Right ventricle myocardium inferior (tissue), 1 donor: ENCODE measurements at regions of chr3 and their contacts with region 1.

Region 1: GRCh38 chr3:27319847-27320526 is 49.2 kb downstream of the NEK10 start:
- DNase-seq: no peak
- ATAC-seq: peak; percentile 67

Region 2: DNA sequence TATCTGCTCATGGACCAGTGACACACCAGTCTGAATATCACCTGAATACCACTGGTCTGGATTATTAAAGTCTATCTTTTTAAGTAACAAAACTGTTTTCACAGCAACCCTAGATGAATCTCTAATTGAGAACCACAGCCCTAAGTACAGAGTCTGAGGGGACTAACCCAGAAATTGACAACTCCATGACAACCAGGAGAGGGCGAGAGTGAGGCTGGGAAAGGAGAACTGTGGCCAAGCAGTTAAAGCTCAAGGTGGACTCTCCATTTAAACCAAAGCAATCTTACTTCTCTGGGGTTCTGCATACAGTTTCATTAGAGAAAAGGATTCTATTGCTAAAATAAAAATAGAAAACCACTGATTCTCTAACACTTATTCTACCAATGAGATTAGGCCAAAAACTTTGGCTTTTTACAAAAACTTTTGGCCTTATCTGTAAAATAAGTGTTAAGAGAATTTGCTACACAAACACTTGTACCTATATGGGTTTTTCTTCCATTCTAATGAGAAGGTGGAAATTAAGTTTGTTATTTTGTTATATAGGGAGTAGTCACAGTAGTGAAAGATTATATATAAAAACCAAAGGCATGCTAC is 37.8 kb after region 1 on chr3:
- intact Hi-C with region 1: loop called (anchors 2 kb)
- DNase-seq: no peak
- ATAC-seq: peak; percentile 63

Region 3: DNA sequence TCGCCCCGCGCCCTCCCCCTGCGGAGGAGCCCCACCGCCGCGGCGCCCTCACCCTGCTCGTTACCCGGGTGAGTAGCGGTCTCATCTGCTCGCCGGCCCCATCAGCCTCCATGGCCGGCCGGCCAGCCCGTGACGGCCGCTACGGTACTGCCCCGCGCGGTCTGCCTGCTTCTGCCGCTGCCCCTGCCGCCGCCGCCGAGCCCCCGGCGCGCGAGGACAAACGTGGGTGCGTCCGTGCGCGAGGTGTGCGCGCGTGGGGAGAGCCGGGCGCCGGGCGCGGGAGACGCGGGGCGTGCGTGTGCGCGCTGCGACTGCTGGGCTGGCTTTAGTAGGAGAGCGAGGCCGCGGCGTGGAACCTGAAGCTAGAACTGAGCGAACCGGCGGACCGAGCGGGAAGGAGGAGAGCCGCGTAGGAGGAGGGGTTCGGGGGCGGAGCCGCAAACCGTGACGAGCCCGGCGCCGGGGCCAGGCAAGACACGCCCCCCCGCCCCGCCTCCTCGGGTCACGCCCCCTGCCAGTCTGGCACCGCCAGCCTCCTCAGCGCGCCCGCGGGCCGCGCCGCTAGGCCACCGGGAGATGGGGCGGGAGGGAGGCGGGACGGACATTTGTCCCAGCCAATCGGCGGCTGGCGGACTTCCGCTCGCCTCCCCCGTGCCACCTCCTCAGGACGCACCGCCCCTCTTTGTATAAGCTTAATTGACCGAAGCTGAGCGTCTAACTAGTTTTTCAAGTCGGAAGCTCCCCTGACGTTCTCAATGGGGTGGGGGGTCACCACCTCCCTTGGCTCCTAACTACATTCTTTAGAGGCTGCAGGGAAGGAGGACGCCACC is 164.2 kb after region 1 on chr3 and contains the start of gene SLC4A7:
- intact Hi-C with region 1: loop called (anchors 5 kb)
- DNase-seq: peak; percentile 99
- ATAC-seq: peak; percentile 97
- total RNA-seq, gene SLC4A7: 13.1 TPM